ENCODE measurements at regions of chrX and their contacts with region 1.

Region 1: DNA sequence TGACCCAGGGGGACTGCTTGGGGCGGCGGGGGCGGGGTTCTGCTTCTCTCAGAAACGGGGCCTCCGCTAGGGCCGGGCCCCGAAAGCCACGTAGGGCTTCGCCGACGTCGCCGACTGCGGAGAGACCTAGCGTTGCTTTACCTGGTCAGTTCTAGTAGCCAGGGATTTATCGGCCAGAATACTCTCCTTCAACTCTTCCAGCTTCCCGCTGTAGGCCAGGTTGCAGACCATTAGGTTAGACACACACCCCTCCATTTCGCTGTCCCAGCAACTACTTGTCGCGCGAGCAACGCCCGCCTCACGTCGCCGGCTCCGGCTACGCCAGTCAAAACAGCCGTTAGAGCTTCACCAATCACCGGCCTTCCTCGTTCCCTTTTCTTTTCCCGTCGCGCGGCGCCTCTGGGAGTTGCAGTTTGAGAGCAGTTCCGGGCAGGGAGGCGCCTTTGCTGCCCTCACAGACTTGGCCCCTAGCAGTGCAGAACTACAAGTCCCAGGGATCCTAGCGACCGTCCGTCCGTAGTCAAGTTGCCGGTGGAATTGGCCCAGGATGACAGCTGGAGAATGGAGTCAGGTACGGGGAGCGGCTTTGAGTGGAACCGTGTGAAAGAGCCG is at the starts of genes ATG4A and PSMD10:
- DNase-seq: peak; percentile 96
- total RNA-seq, gene ATG4A: 19.2 TPM
- total RNA-seq, gene PSMD10: 22.1 TPM

Region 2: GRCh38 chrX:107857799-107858198 is 233.6 kb before region 1 on chrX:
- intact Hi-C with region 1: no loop called
- DNase-seq: no peak

Region 3: GRCh38 chrX:108131471-108131870 is 40.1 kb after region 1 on chrX:
- intact Hi-C with region 1: loop called (anchors 5 kb)
- DNase-seq: no peak